ENCODE measurements at regions of chr2 and their contacts with region 1.

Region 1: GRCh38 chr2:219057709-219058540 is 2.8 kb downstream of the IHH start:
- DNase-seq: peak; percentile 56 to 75 (median 71)
- H3K4me3 ChIP-seq: peak overlapping the region in 4 of 7 experiments; percentile 15 to 58 (median 46)
- H3K27ac ChIP-seq: no peak overlapping the region
- H3K4me1 ChIP-seq: peaks cover 0 to 41% (median 21%) of the 10 kb centered on the region in 4 experiments
- H3K27me3 ChIP-seq: peaks cover 0 to 91% (median 40%) of the 10 kb centered on the region in 5 experiments

Region 2: GRCh38 chr2:219041252-219041651 is 16.7 kb before region 1 on chr2 and contains the start of gene CFAP65:
- CTCF ChIA-PET with region 1: interaction called, 11 read pairs
- POLR2A ChIA-PET with region 1: no interaction called
- DNase-seq: peak; percentile 38 to 50 (median 44)
- H3K4me3 ChIP-seq: peak within 1 kb of the TSS in 3 of 7 experiments; percentile 14 to 64 (median 56)
- H3K27ac ChIP-seq: no peak within 1 kb of the TSS
- H3K4me1 ChIP-seq: peaks cover 0 to 4% (median 1%) of the 10 kb centered on the region in 4 experiments
- H3K27me3 ChIP-seq: peaks cover 4 to 84% (median 35%) of the 10 kb centered on the region in 5 experiments

Region 3: DNA sequence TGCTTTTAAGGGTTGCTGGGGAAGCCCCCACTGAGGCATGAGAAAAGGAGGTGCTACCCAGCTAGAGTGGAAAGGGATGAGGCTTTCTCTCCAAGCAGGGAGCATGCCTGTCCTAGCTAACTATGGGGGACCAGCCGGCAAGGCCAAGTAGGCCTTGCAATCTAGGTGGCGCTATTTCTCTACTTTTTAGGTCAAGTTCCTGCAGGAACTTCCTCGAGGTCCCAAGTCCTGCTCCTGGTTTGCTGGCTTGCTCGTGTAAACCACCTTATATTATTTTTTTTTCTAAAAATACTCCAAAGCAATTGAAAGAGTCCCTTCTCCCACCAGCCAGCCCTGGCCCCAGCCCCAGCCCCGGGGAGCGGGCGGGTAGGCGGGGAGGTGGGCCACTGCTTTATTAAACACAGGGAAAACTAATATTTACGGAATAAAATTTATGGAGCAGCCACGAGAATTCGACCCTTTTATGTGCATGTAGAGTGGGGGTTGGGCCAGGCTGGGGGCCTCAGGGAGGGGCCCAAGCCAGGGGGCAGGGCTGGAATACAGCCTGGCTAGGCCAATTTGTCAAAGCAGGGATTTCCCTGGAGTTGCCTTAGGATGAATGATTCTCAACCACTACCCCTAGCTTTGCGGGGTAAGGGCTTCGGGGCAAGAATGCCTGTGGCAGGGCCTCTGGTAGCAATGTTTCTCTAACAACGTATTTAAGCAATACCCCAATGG is 15.6 kb after region 1 on chr2:
- CTCF ChIA-PET with region 1: interaction called, 49 read pairs
- POLR2A ChIA-PET with region 1: no interaction called
- DNase-seq: peak; percentile 44 to 57 (median 50)
- H3K4me3 ChIP-seq: no peak overlapping the region
- H3K27ac ChIP-seq: no peak overlapping the region
- H3K4me1 ChIP-seq: no peaks in the 10 kb centered on the region
- H3K27me3 ChIP-seq: no peaks in the 10 kb centered on the region

Region 4: DNA sequence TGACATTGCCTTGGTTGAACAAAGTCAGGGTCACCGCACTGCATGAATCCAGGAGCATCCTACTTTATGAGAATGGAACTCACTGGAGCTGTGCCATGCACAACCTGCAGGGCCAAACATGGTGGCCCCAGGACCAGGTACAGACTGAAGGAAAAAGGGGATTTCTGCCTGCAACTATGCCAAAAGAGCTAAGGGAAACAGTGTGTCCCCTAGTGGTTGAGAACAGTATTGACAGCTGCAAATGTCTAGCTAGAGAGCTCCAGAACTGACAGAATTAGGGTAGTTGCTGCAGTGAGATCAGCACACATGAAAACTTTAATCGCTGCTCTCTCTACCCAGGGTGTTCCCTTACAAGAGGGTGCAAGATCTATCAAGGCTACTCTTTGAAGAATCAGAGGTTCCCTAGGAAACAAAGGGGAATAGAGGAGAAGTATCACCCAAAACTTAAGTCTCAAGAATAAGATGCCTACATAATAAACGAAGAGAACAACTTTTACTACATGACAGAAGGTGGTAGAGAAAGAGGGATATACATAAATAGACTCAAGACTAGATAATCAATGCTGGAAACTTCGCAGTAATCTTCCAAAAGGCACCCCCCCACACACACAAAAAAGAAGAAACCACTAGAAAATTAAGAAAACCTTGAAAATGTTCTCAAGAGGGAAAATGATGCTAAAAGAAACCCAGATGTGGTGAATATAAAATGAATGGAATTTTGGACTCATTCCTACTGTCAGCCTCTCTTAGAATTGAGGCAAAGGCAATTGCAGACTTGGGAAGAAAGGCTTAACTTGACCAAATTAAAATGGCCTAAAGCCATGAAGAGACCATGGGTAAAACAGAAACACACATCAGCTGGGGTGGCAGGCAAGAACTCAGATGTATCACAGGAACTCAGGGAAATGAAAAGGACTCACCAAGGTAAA is 46.4 kb after region 1 on chr2:
- CTCF ChIA-PET with region 1: interaction called, 11 read pairs
- POLR2A ChIA-PET with region 1: no interaction called
- DNase-seq: peak; percentile 48 to 61 (median 59)
- H3K4me3 ChIP-seq: no peak overlapping the region
- H3K27ac ChIP-seq: no peak overlapping the region
- H3K4me1 ChIP-seq: peaks cover 4 to 10% (median 4%) of the 10 kb centered on the region in 4 experiments
- H3K27me3 ChIP-seq: no peaks in the 10 kb centered on the region

Region 5: DNA sequence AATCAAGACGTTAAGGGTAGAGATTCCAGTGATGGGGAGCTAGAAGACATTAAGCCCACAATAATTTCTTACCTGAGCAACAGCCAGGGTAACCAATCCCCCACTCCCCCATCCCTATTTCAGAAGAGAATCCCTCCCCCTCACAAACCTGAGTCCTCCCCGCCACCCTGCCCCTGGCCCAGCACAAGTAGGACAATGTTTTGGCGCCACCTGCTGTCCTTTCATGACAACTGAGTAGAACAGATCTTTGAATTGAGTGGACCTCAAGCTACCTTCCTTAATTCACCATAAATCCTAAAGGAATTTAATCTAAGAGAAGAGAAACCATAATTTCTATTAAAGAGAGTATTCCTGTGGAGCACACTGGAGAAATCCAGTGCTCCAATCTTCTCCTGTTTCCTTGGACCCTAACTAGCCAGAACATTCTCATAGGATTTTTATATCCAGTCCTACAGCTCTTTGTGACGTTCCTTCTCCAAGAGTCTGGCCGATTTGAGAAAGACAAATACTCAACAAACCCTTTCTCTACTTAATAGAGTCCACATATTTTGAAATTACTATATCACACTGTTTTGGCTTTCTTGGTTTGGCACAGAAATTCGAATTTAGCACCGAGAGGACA is 61.6 kb after region 1 on chr2:
- CTCF ChIA-PET with region 1: interaction called, 336 read pairs
- POLR2A ChIA-PET with region 1: no interaction called
- DNase-seq: peak; percentile 49 to 68 (median 61)
- H3K4me3 ChIP-seq: no peak overlapping the region
- H3K27ac ChIP-seq: no peak overlapping the region
- H3K4me1 ChIP-seq: peaks cover 0 to 11% (median 0%) of the 10 kb centered on the region in 4 experiments
- H3K27me3 ChIP-seq: no peaks in the 10 kb centered on the region

Region 6: DNA sequence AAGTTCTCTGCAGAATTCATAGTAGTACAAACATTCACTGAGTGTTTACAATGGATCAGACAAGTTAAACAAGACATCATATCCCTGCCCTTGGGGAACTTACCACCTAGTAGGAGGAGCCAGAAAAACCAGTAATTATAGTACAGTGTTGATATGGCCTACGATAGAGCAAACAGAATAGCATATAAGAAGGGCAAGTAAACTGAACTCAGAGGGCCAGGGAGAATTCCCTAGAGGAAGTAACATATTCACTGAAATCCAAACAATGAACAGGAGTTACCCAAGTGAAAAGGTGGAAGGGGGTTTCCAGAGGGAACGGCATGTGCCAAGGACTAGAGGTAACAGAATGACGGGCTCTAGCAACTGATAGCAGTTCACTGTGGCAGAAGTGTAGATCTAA is 68.6 kb after region 1 on chr2:
- CTCF ChIA-PET with region 1: interaction called, 336 read pairs
- POLR2A ChIA-PET with region 1: no interaction called
- DNase-seq: no peak
- H3K4me3 ChIP-seq: no peak overlapping the region
- H3K27ac ChIP-seq: no peak overlapping the region
- H3K4me1 ChIP-seq: peaks cover 0 to 24% (median 7%) of the 10 kb centered on the region in 4 experiments
- H3K27me3 ChIP-seq: no peaks in the 10 kb centered on the region

Region 7: DNA sequence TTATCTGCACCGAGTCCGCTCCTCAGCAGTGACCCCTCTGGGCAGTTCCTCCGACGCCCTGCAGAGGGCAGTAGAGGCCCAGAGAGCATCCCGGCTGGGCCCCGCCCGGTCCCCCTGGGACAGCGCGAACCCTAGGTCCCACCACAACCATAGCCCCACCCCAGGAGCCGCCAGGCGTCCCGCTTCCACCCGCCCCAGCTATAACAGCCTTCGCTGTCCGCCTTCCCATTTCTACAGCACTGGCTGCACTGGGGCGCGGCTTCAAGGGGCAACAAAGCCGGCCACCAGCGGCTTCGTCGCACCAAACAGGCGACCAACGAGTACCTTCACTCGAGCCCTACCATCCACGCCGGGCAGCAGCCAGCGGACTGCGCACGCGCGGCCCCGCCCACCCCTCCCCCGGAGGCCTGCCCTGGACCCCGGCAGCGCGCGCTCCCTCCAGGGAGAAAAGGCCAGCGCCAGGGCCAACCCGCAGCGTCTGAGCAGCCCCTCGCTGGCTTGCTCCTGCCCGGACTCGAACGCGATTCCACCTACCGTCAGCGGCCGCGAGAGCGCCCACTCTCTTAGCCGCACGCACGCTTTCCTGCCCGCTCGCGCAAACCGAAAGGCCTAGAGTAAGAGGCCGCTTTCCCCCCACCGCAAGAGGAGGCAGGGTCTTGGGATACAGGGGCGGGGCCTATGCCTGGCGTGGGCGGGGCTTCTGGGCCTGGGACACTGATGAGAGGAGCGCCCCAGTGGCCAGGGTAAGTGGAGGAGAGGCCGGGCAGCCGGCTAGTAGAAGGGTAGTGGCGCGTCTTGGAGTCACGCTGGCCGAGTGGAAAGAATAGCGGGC is 102.5 kb after region 1 on chr2 and contains the start of gene NHEJ1:
- CTCF ChIA-PET with region 1: interaction called, 129 read pairs
- POLR2A ChIA-PET with region 1: no interaction called
- DNase-seq: peak; percentile 90 to 94 (median 94)
- H3K4me3 ChIP-seq: peak within 1 kb of the TSS; percentile 52 to 84 (median 78)
- H3K27ac ChIP-seq: peak within 1 kb of the TSS in 1 of 2 experiments; percentile 73
- H3K4me1 ChIP-seq: peaks cover 0 to 14% (median 13%) of the 10 kb centered on the region in 4 experiments
- H3K27me3 ChIP-seq: no peaks in the 10 kb centered on the region